CD8-positive, alpha-beta T cell (primary cell): ENCODE measurements at regions of chr19 and their contacts with region 1.

Region 1: DNA sequence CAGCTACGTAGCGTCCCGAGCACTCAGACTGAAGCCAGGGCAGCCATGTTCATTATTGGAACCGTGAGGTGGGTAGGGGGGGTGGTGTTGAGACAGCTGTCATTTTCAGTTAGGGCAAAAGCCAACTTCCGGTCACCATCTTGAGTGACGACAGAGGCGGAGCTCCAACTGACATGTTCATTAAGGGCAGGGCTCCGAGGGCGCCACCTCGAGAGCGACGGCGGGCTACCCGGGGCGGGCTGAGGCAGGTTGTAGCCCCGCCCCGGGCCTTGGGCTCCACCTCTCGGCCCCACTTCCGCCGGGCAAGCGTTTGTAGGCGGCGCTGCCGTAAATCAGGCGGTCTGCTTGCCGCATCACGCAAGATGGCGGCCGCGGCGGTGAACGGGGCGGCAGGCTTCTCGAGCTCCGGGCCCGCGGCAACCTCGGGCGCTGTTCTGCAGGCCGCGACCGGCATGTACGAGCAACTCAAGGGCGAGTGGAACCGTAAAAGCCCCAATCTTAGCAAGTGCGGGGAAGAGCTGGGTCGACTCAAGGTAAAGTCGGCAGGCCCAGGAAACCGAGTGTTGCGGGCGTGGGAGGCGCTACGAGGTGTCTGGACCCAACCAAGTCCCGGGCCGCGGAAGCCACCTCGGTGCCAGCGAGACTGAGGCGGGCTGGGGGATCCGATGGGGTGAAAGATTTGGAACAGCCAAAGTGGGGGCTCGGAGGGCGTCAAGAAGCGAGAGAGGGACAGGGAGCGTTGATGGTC is at the start of gene PSMD8:
- DNase-seq: peak; percentile 95 to 100 (median 98)
- ATAC-seq: peak; percentile 97
- H3K4me3 ChIP-seq: peak within 1 kb of the TSS; percentile 71 to 84
- H3K4me3 Mint-ChIP-seq: peak within 1 kb of the TSS; percentile 99
- H3K27ac ChIP-seq: peak within 1 kb of the TSS; percentile 83 to 89
- H3K27ac Mint-ChIP-seq: peak within 1 kb of the TSS; percentile 96
- H3K4me1 ChIP-seq: peaks cover 19% of the 10 kb centered on the region
- H3K4me1 Mint-ChIP-seq: peaks cover 29% of the 10 kb centered on the region
- H3K27me3 ChIP-seq: no peaks in the 10 kb centered on the region
- H3K27me3 Mint-ChIP-seq: peaks cover 3% of the 10 kb centered on the region
- CTCF ChIP-seq: no peak
- total RNA-seq, gene PSMD8: 71.5 to 75.1 TPM

Region 2: GRCh38 chr19:38173291-38174041 is 201.1 kb before region 1 on chr19:
- CTCF ChIA-PET with region 1: no interaction called
- POLR2A ChIA-PET with region 1: no interaction called
- intact Hi-C with region 1: no loop called
- DNase-seq: no peak
- ATAC-seq: no peak
- H3K4me3 ChIP-seq: no peak overlapping the region
- H3K4me3 Mint-ChIP-seq: no peak overlapping the region
- H3K27ac ChIP-seq: no peak overlapping the region
- H3K27ac Mint-ChIP-seq: no peak overlapping the region
- H3K4me1 ChIP-seq: no peaks in the 10 kb centered on the region
- H3K4me1 Mint-ChIP-seq: no peaks in the 10 kb centered on the region
- H3K27me3 ChIP-seq: no peaks in the 10 kb centered on the region
- H3K27me3 Mint-ChIP-seq: no peaks in the 10 kb centered on the region
- CTCF ChIP-seq: no peak

Region 3: GRCh38 chr19:38245826-38246498 is 128.6 kb before region 1 on chr19:
- CTCF ChIA-PET with region 1: interaction called, 7 read pairs
- POLR2A ChIA-PET with region 1: interaction called, 6 read pairs
- intact Hi-C with region 1: loop called in 1 of 2 experiments (anchors 1 kb)
- DNase-seq: no peak
- ATAC-seq: no peak
- H3K4me3 ChIP-seq: no peak overlapping the region
- H3K4me3 Mint-ChIP-seq: no peak overlapping the region
- H3K27ac ChIP-seq: no peak overlapping the region
- H3K27ac Mint-ChIP-seq: no peak overlapping the region
- H3K4me1 ChIP-seq: no peaks in the 10 kb centered on the region
- H3K4me1 Mint-ChIP-seq: peaks cover 4% of the 10 kb centered on the region
- H3K27me3 ChIP-seq: no peaks in the 10 kb centered on the region
- H3K27me3 Mint-ChIP-seq: peaks cover 5% of the 10 kb centered on the region
- CTCF ChIP-seq: no peak

Region 4: DNA sequence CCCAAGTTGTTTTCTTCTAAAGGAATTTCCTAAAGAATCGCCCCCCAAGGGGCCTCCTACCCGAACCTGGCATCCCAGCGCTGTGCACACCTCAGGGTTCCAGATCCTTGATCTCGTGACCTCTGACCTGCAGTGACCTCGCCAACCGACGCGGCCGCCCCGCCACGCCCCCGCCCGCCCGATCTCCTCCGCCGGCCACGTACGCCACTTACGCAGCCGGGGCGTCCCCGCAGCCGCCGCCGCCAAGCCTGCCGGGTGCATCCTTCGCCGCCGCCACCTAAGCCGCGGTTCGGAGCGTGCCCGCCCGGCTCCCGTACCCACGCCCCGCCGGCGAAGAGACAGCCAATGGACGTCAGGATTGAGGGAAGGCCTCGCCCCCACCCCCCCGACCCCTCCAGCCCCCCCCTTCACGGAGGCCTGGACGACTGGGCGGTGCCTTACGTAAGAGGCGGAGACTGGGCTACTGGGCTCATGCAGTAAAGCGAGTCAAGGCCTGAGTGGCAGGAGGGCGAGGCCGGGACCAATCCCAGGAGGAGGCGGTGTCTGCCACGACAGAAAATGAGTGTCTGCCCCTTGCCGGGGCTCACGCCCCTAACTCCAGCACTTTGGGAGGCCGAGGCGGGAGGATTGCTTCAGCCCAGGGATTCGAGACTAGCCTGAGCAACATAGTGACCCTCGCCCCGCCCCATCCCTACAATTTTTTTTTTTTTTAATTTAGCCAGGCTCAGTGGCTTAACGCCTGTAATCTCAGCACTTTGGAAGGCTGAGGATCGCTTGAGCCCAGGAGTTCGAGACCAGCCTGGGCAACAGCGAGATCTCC is 58.7 kb before region 1 on chr19 and contains the start of gene YIF1B:
- CTCF ChIA-PET with region 1: no interaction called
- POLR2A ChIA-PET with region 1: interaction called, 3 read pairs
- intact Hi-C with region 1: loop called (anchors 1 kb)
- DNase-seq: peak; percentile 91 to 98 (median 94)
- ATAC-seq: peak; percentile 92
- H3K4me3 ChIP-seq: peak within 1 kb of the TSS; percentile 60 to 68
- H3K4me3 Mint-ChIP-seq: peak within 1 kb of the TSS; percentile 86
- H3K27ac ChIP-seq: peak within 1 kb of the TSS; percentile 93 to 95
- H3K27ac Mint-ChIP-seq: peak within 1 kb of the TSS; percentile 95
- H3K4me1 ChIP-seq: peaks cover 34% of the 10 kb centered on the region
- H3K4me1 Mint-ChIP-seq: peaks cover 52% of the 10 kb centered on the region
- H3K27me3 ChIP-seq: peaks cover 0 to 2% of the 10 kb centered on the region in 2 experiments
- H3K27me3 Mint-ChIP-seq: no peaks in the 10 kb centered on the region
- CTCF ChIP-seq: no peak
- total RNA-seq, gene YIF1B: 12.0 to 13.0 TPM

Region 5: GRCh38 chr19:38387550-38388348 is 13.1 kb after region 1 on chr19 and contains the start of gene GGN:
- CTCF ChIA-PET with region 1: interaction called, 3 read pairs
- POLR2A ChIA-PET with region 1: interaction called, 11 read pairs
- intact Hi-C with region 1: loop called (anchors 1 kb)
- DNase-seq: peak; percentile 54 to 87 (median 76)
- ATAC-seq: peak; percentile 70
- H3K4me3 ChIP-seq: peak within 1 kb of the TSS; percentile 55 to 68
- H3K4me3 Mint-ChIP-seq: peak within 1 kb of the TSS; percentile 87
- H3K27ac ChIP-seq: no peak within 1 kb of the TSS
- H3K27ac Mint-ChIP-seq: peak within 1 kb of the TSS; percentile 82
- H3K4me1 ChIP-seq: peaks cover 36% of the 10 kb centered on the region
- H3K4me1 Mint-ChIP-seq: peaks cover 19% of the 10 kb centered on the region
- H3K27me3 ChIP-seq: peaks cover 4 to 13% of the 10 kb centered on the region in 2 experiments
- H3K27me3 Mint-ChIP-seq: peaks cover 29% of the 10 kb centered on the region
- CTCF ChIP-seq: no peak
- total RNA-seq, gene GGN: 0.67 TPM in 1 of 2 experiments, not detected in the other

Region 6: GRCh38 chr19:38402967-38403861 is 28.6 kb after region 1 on chr19 and contains the start of gene FAM98C:
- CTCF ChIA-PET with region 1: interaction called, 22 read pairs
- POLR2A ChIA-PET with region 1: interaction called, 37 read pairs
- intact Hi-C with region 1: loop called (anchors 1 to 2 kb)
- DNase-seq: peak; percentile 95 to 99 (median 97)
- ATAC-seq: peak; percentile 96
- H3K4me3 ChIP-seq: peak within 1 kb of the TSS; percentile 76 to 95
- H3K4me3 Mint-ChIP-seq: peak within 1 kb of the TSS; percentile 94
- H3K27ac ChIP-seq: peak within 1 kb of the TSS; percentile 79 to 81
- H3K27ac Mint-ChIP-seq: peak within 1 kb of the TSS; percentile 98
- H3K4me1 ChIP-seq: peaks cover 11% of the 10 kb centered on the region
- H3K4me1 Mint-ChIP-seq: peaks cover 15% of the 10 kb centered on the region
- H3K27me3 ChIP-seq: no peaks in the 10 kb centered on the region
- H3K27me3 Mint-ChIP-seq: no peaks in the 10 kb centered on the region
- CTCF ChIP-seq: peak; percentile 95
- total RNA-seq, gene FAM98C: 28.2 to 29.3 TPM

Region 7: DNA sequence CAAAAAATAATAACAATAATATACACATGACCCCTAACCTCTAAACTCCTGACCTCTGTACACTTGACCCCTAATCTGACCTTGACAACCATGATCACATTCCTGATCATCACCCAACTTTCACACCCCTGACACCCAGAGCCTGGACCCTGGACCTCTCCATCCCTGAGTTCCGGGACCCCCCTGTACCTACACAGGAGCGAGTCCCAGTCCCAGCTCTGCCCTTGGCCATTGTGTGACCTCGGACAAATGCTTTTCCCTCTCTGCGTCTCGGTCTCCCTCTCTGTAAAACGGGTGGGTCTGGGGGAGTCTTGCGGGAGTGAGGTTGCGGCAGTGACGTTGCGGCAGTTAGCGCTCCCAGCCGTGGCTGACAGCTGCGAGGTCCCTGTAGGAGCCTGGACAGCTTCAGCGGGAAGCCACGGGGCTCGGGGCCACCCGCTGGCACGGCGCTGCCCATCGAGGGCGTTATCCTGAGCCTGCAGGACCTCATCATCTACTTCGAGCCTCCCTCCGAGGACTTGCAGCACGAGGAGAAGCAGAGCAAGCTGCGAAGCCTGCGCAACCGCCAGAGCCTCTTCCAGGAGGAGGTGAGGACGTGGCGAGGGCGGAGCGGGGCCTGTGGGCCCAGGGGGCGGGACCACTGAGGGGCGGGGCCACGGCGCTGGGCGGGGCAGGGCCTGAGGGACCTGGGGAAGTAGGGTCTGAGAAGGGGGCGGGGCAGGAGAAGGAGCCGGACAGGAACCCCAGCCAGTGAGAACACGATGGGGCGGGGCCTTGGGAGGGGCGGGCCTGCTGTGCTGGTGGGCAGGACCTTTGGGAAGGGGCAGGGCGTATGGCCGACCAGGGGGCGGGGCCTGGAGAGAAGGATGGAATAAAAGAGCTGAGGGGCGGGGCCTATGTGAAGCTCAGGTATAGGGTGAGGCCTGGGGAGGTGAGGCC is 78.1 kb after region 1 on chr19:
- CTCF ChIA-PET with region 1: no interaction called
- POLR2A ChIA-PET with region 1: no interaction called
- intact Hi-C with region 1: no loop called
- DNase-seq: peak in 2 of 9 experiments; percentile 19 to 22
- ATAC-seq: no peak
- H3K4me3 ChIP-seq: no peak overlapping the region
- H3K4me3 Mint-ChIP-seq: no peak overlapping the region
- H3K27ac ChIP-seq: no peak overlapping the region
- H3K27ac Mint-ChIP-seq: no peak overlapping the region
- H3K4me1 ChIP-seq: no peaks in the 10 kb centered on the region
- H3K4me1 Mint-ChIP-seq: no peaks in the 10 kb centered on the region
- H3K27me3 ChIP-seq: no peaks in the 10 kb centered on the region
- H3K27me3 Mint-ChIP-seq: peaks cover 7% of the 10 kb centered on the region
- CTCF ChIP-seq: no peak